HCT116 (cell line): ENCODE measurements at regions of chr6 and their contacts with region 1.

Region 1: DNA sequence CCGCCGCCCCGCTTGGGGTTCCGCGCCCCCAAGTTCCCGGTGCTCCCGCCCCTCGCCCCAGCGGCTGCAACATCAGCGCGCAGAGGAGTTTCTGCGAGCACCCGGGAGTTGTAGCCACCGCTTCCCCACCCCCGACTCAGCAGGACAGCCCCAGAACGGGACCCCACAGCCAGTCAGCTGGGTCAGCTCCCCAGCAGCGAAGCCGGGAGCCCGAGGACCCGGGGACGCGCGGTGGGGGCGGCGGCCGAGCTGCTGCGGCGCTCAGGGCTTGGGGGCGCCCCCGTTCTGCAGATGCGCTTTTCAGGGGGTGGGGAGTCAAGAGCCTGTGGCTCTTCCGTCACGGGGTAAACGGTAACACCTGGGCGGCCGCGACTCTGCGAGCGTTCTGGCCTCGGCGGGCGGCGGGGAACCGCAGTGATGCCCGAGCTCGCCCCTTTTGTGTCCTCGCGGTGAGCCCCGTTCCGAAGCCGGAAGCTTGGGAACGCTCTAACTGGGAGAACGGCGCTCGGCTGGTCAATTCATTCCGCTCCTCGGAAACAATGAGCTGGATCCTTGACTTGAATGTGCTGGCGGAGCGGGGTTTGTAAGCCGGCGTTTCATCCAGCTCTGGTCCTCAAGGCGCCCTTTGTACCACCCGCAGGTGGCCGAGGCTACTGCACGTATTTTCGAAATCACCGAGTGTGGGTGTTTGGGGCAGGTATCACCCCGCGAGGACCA is 774 bp downstream of the PLEKHG1 start:
- DNase-seq: peak; percentile 72
- ATAC-seq: peak; percentile 83
- H3K4me3 ChIP-seq: peak overlapping the region; percentile 61 to 72
- H3K27ac ChIP-seq: peak overlapping the region; percentile 46; the same call in 1 of the 2 replicates
- H3K4me1 ChIP-seq: peaks cover 4 to 13% of the 10 kb centered on the region in 2 experiments; a peak in 2 of 4 replicates
- H3K27me3 ChIP-seq: no peaks in the 10 kb centered on the region
- CTCF ChIP-seq: peak; percentile 10 to 55 (median 48); a peak in 4 of 6 replicates
- POLR2A ChIP-seq: no peak
- RAD21 ChIP-seq: peak; percentile 56

Region 2: DNA sequence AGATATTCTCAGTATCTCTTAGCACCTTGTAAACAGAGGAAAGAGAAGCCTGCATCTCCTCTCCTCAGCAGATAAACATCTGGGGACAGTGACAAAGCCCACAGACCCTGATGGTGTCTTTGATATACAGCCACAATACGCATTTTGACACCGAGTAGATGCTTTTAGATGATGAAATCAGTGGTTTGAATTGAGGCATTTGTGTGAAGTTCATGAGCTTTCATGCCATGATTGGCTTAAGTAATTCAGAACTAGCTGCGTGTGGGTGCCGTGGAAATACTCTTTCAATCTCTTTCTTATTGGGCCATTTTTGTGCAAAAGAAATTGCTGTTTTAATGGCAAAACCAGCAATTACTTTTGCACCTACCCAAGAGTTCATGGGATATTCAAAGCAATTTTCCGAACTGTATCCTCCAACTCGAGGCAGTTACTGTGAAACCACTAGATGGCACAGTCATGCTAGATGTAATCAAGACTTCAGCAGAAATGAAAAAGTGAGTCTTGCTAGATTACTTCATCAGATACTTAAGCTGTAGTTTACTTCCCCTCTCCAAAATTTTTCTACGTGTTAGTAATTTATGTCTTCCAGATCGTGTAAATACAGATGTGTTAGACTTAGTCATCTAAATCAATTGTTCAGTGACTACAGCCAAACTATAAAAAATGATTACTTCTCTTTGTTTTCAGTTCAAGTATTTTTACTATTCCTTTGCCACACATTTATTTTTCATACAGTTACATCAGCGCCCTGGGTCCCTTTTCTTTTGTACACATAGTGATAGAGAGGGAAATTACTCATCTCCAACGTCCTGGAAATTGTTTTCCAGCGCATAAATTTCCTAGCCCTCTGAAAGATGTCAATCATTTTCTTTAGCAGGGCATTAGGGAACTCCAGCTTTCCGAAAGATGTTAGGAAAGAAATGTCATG is 182.3 kb before region 1 on chr6:
- CTCF ChIA-PET with region 1: interaction called, 18 read pairs
- POLR2A ChIA-PET with region 1: no interaction called
- RAD21 ChIA-PET with region 1: interaction called in 1 of 2 experiments, 4 read pairs
- intact Hi-C with region 1: loop called (anchors 2 kb)
- DNase-seq: peak; percentile 88
- ATAC-seq: peak; percentile 83
- H3K4me3 ChIP-seq: peak overlapping the region; percentile 13 to 50
- H3K27ac ChIP-seq: peak overlapping the region; percentile 40; the same call in 1 of the 2 replicates
- H3K4me1 ChIP-seq: peaks cover 13 to 20% of the 10 kb centered on the region in 2 experiments
- H3K27me3 ChIP-seq: no peaks in the 10 kb centered on the region
- CTCF ChIP-seq: peak; percentile 80 to 88 (median 83)
- POLR2A ChIP-seq: no peak
- RAD21 ChIP-seq: peak; percentile 96